ENCODE measurements at regions of chr3 and their contacts with region 1.

Region 1: GRCh38 chr3:141311496-141312353 is 56.6 kb upstream of the ZBTB38 start:
- DNase-seq: peak; percentile 98
- CTCF ChIP-seq: peak; percentile 88

Region 2: DNA sequence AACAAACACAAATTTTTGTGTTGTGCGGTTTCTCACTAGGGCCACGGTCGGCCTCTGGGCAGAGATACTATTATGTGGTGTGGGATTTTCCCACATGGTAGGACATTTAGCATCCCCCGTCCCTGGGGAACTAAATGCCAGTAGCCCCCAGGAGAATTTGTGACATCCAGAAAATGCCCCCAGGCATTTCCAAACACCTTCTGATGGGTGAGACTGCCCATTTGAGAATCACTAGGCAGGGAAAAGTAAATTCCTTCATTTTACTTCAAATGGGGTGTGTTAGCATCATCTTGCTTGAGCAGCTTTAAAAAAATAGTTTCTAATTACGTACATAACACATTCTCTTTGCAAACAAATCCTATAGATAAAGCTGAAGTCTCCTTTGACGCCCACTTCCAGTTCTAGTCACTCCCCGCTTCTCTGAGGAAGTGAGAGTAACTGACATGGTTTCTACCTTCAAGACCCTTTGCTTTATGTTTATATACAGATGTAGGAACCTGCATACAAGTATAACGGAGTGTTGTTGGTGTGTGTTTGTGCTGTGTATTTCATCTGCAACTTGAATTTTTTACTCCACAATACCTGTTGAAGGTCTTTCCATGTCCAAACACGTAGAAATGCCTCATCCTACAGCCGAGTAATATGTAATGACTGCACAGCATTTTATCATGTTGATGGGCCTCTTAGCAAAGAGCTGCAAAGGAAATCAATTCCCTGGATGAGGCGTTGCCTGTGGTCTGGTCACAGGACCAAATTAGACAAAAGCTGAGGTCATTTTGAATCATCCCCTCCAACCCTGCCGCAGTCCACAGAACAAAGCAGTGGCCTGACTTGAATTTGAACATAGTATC is 25.2 kb after region 1 on chr3:
- CTCF ChIA-PET with region 1: interaction called, 30 read pairs
- POLR2A ChIA-PET with region 1: no interaction called
- DNase-seq: peak; percentile 78
- CTCF ChIP-seq: no peak

Region 3: GRCh38 chr3:141360888-141361598 is 49.3 kb after region 1 on chr3:
- CTCF ChIA-PET with region 1: interaction called, 17 read pairs
- POLR2A ChIA-PET with region 1: no interaction called
- DNase-seq: peak; percentile 72
- CTCF ChIP-seq: peak; percentile 70

Region 4: DNA sequence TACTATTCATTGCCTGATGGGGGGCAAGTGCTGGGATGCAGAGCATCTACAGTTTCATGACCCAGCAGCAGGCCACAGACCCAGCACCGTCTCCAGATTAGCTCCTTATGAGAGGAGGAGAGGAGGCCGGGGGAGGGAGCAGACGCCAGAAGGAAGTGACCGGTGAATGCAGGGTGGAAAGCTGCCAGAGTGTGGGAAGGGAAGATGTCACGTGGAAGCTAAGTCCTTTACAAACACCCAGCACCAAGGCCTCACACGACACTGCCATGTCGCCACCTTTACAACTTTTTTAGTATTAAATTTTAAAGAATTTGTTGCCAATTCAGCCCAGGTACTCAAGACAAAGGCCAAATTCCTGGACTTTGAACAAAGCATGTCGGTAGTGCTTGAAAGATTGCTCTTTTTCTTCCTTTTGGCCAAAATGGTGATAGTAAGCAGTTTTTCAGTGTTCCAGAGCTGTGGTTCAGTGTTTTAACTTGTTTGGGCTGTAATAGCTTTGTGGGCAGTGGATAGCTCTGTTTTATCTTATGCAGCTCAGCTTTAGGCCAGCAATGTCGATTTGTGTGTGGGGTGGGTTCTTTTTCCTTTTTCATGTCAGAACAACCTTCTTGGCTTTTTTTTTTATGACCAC is 114.8 kb after region 1 on chr3:
- CTCF ChIA-PET with region 1: interaction called, 12 read pairs
- POLR2A ChIA-PET with region 1: no interaction called
- DNase-seq: no peak
- CTCF ChIP-seq: no peak

Region 5: DNA sequence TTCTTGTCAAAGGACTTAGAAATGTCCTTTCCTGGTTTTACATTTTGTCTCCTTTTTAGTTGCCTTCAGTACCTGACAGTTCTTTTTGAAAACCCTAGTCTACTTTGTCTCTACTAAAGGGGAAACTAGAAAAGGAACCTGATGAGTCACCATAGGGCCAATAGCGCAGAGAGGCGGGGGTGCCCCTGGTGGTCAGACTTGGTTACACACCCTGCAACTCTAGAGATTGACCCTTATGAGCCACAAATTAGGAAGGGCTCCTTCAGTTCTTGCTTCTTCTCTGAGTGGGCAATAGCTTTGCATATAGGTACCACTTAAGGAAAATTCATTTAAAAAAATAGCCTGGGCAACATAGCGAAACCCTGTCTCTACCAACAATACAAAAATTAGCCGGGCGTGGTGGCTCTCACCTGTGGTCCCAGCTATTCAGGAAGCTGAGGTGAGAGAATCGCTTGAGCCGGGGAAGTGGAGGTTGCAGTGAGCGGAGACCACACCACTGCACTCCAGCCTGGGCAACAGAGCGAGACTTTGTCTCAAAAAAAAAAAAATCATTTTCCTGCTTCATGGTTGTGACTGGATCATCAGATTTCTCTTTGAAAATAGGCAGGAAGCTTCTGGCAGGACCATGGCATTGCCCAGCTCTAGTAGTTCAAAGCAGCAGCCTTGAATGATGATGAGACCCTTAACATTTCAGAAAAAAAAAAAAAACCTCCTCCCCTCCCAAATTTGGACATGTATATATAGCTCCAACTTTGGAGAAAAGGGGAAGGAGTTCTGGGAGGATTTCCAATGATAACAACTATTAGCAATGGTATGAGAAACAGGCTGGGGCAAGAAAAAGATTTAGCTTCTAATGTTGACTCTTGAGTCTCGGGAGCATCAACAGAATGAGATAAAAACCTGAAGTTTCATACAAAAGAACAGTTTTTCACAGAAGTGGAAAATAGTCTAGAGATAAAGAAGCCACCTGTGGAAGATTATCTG is 129.9 kb after region 1 on chr3:
- CTCF ChIA-PET with region 1: interaction called, 60 read pairs
- POLR2A ChIA-PET with region 1: interaction called, 4 read pairs
- DNase-seq: peak; percentile 85
- CTCF ChIP-seq: peak; percentile 63

Region 6: DNA sequence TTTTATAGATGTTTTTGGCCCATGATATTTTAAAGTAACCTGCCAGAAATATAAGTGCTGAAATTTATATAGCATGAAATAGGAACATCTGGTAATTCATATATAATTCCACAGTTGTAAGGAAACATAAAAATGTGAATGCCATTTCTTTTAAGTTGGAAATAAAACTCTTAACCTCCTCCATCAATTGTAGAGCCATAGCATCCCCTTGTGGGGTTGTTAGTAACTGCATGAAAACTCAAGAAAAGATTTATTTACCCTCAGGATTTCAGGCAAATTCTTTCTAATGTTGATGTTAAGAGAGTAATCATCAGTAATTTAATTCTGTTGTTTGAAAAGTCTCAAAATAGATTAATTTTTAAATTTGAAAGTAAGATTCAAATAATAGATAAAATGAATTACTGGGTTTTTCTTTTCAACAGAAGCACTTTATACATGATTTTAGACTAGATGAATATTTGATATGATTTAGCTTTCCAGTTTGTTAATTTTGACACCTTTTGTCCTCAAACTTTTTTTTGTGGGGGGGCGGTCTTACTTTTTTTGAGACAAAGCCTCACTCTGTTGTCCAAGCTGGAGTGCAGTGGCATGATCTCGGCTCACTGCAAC is 249.8 kb after region 1 on chr3:
- CTCF ChIA-PET with region 1: interaction called, 11 read pairs
- POLR2A ChIA-PET with region 1: no interaction called
- DNase-seq: peak; percentile 27
- CTCF ChIP-seq: peak; percentile 86